AG04450 (cell line): ENCODE measurements at regions of chr2 and their contacts with region 1.

Region 1: GRCh38 chr2:131105156-131105949 is at the start of gene PLEKHB2:
- DNase-seq: peak; percentile 47
- H3K4me3 ChIP-seq: peak within 1 kb of the TSS; percentile 95
- H3K27ac ChIP-seq: peak within 1 kb of the TSS; percentile 91
- H3K27me3 ChIP-seq: no peaks in the 10 kb centered on the region
- CTCF ChIP-seq: peak; percentile 30
- polyA plus RNA-seq, gene PLEKHB2: 63.8 and 70.5 TPM in 2 replicates

Region 2: DNA sequence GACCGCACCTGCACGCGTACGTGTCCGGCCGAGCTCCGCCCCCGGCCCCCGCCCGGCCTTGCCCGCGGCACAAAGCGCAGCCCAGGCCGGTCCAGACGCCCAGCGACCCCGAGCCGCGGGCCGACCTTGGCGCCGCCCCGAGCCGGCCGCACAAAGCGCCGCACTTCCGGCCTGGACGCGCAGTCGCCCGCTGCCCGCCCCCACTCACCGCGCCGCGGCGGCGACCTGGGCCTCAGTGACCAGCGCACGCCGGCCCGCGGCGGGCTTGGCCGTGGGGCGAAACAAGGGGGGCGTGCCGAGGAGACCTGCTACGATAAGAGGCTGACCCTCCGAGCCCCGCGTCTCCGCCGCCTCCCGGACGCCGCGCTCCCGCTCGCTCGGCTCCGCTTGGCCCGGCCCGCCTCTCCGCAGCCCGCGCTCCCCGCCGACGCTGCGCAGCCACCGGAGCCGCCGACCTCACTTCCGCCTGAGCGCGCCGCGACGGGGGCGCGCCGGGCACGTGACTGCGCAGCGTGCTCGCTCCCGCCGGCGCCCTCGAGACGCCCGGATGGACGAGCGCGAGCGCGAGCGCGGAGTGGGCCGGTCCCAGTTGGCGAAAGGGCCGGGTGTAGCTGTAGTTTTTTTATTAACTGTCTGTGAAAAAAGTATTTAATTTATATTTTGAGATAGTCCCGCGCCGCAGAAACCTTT is 12.2 kb before region 1 on chr2 and contains the start of gene FAM168B:
- CTCF ChIA-PET with region 1: interaction called, 4 read pairs
- POLR2A ChIA-PET with region 1: interaction called, 25 read pairs
- DNase-seq: peak; percentile 53
- H3K4me3 ChIP-seq: peak within 1 kb of the TSS; percentile 69
- H3K27ac ChIP-seq: peak within 1 kb of the TSS; percentile 70
- H3K27me3 ChIP-seq: no peaks in the 10 kb centered on the region
- CTCF ChIP-seq: no peak
- polyA plus RNA-seq, gene FAM168B: 84.3 and 99.2 TPM in 2 replicates